Activated B cell treated with CpG ODN at 0.5 μM for 24 hours (primary cell): ENCODE measurements at regions of chr7 and their contacts with region 1.

Region 1: GRCh38 chr7:26061688-26062150 is 90.3 kb upstream of the NFE2L3 start:
- DNase-seq: peak; percentile 51
- ATAC-seq: peak; percentile 82
- H3K4me3 Mint-ChIP-seq: no peak overlapping the region
- H3K27ac Mint-ChIP-seq: no peak overlapping the region
- H3K4me1 Mint-ChIP-seq: peaks cover 4% of the 10 kb centered on the region
- H3K27me3 Mint-ChIP-seq: peaks cover 42% of the 10 kb centered on the region
- CTCF ChIP-seq: no peak

Region 2: DNA sequence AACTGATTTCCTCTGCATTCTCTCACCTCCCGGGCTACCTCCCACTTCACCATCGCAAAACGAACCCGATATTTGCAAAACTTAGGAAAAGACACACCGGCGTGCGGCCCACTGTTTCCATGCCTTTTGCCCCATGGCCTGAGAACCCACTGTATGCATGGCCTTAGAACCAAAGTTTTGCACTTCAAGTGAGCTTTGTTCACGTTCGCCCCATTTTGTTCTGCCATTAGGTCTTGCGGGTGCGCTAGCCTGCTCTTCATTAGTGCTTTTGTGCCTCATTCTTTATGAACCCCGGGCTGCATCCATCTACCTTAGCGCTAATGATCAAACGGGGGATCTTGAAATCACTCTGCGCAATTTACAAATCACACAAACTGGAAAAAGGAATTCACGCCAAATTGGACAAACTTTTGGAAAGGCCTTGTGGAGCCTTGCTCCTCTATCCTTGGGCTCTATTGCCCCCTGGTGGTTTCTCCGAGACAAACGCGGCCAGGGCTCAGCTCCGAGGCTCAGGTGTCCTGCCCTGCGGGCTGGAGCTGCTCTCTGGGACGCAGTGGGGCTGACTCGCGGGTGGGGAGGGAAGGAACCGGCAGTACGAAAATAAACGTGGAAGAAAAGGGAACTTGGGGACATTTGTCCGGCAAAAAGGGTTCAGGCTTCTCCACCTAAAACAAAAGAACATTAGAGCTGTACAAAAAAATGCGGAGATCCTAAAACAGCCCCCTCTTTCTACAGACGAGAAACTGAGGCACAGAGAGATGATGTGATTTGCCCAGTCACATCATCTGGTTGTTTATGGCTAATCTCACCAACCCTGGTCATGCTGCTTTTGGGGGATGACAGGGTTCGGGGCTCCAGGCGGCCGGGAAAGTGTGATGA is 210.1 kb before region 1 on chr7:
- CTCF ChIA-PET with region 1: no interaction called
- POLR2A ChIA-PET with region 1: no interaction called
- intact Hi-C with region 1: no loop called
- DNase-seq: no peak
- ATAC-seq: peak; percentile 64
- H3K4me3 Mint-ChIP-seq: peak overlapping the region; percentile 70
- H3K27ac Mint-ChIP-seq: peak overlapping the region; percentile 76
- H3K4me1 Mint-ChIP-seq: peaks cover 12% of the 10 kb centered on the region
- H3K27me3 Mint-ChIP-seq: peaks cover 50% of the 10 kb centered on the region
- CTCF ChIP-seq: no peak

Region 3: DNA sequence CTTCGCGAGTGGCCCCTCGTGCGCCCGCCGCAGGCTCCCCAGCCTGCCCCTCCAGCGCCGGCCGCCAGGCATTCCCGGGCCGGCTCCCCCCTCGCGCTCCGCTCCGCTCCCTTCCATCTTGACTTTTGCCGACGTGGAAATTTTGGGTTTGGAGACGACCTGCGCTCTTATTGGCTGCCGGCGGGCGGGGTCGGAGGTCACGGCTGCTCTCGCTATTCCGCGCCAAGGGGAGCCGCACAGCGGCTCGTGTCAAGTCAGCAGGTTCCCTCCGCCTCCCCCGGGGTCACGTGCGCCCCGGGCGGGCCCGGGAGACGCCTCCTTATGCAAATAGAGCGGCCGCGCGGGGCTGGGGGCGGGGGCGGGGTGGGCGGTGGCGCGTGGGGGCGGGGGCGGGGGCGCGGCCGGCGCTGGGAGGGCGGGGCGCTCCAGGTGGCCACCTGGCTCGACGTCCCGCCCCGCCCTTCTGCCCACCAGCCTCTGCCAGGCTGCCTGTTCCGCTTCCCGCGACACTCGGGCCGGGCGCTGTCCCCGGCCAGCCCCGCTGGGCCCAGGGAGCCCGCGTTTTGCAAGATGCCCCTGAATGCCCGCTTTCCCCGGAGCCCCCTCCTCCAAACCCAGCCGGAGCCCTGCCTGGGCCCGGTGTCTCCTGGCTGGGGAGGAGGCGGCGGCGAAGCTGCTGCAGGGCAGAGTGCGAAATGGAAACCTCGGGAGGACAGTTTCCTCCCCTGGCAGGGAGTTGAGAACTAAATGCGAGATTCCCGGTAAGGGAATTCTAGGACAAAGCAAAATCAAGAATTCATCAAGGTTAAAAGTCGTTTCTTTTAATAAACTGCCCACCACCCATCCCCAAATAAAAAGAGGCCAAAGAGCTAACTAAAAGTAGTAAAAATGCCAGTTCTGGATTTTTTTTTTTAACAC is 110.4 kb before region 1 on chr7:
- CTCF ChIA-PET with region 1: no interaction called
- POLR2A ChIA-PET with region 1: no interaction called
- intact Hi-C with region 1: loop called (anchors 1 kb)
- DNase-seq: peak; percentile 82
- ATAC-seq: peak; percentile 93
- H3K4me3 Mint-ChIP-seq: peak overlapping the region; percentile 92
- H3K27ac Mint-ChIP-seq: peak overlapping the region; percentile 81
- H3K4me1 Mint-ChIP-seq: peaks cover 35% of the 10 kb centered on the region
- H3K27me3 Mint-ChIP-seq: peaks cover 31% of the 10 kb centered on the region
- CTCF ChIP-seq: no peak

Region 4: DNA sequence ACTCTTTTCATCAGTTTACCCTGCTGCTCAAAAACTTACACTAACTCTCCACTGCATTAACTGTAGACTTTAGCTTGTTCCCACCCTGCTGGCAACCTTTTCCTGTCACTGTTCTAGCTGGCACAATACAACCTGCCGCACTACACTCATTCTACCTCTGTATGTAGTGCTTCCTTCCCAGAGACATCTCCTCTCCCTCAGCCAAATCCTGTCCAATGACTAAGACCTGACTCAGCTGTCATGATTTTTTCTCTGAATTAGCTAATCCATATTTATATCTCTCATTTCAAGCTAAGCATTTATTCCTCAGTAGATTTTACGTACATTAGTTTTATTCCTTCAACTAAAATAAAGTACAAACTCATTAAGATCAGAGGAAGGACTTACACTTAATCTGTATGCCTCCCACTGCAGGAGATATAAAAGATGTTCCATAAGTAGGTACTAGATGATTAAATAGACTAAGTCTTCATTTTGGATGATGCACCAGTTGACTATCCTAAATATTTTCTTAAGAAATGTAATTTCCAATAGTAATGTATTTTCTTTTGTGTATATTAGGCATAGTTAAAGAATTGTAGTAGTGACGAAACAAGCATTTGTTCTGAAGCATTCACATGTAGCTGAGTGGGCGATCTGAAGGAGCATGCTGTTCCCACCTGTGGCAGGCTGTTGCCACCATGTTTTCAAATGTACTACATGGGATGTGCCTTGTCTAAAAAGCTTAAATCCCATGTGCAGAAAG is 613.6 kb after region 1 on chr7:
- CTCF ChIA-PET with region 1: no interaction called
- POLR2A ChIA-PET with region 1: no interaction called
- intact Hi-C with region 1: loop called (anchors 10 kb)
- DNase-seq: no peak
- ATAC-seq: no peak
- H3K4me3 Mint-ChIP-seq: no peak overlapping the region
- H3K27ac Mint-ChIP-seq: no peak overlapping the region
- H3K4me1 Mint-ChIP-seq: peaks cover 12% of the 10 kb centered on the region
- H3K27me3 Mint-ChIP-seq: no peaks in the 10 kb centered on the region
- CTCF ChIP-seq: no peak

Region 5: GRCh38 chr7:27535795-27536194 is 1474.1 kb after region 1 on chr7:
- CTCF ChIA-PET with region 1: no interaction called
- POLR2A ChIA-PET with region 1: no interaction called
- intact Hi-C with region 1: no loop called
- DNase-seq: no peak
- ATAC-seq: no peak
- H3K4me3 Mint-ChIP-seq: no peak overlapping the region
- H3K27ac Mint-ChIP-seq: no peak overlapping the region
- H3K4me1 Mint-ChIP-seq: no peaks in the 10 kb centered on the region
- H3K27me3 Mint-ChIP-seq: no peaks in the 10 kb centered on the region
- CTCF ChIP-seq: no peak